ENCODE measurements at regions of chr5 and their contacts with region 1.

Region 1: GRCh38 chr5:64229163-64229774 is 63.6 kb downstream of the RNF180 start:
- DNase-seq: no peak
- H3K4me3 ChIP-seq: no peak overlapping the region
- H3K27ac ChIP-seq: no peak overlapping the region
- H3K27me3 ChIP-seq: no peaks in the 10 kb centered on the region
- CTCF ChIP-seq: peak; percentile 44 to 81 (median 70)

Region 2: DNA sequence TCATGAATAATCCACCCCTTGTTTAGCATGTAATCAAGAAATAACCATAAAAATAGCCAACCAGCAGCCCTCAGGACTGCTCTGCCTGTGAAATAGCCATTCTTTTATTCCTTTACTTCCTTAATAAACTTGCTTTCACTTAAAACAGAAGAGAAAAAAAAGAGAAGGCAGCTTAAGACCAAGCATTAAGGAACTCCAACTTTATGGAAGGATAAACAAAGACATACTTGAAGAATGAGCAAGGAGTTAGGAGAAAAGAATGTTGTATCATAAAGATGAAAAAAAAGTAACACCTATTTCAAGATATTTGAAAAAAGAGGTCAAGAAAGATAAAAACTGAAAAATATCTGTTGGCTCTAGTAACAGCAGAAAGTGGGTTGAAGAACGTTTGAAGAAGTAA is 44.0 kb after region 1 on chr5:
- intact Hi-C with region 1: no loop called
- DNase-seq: no peak
- H3K4me3 ChIP-seq: no peak overlapping the region
- H3K27ac ChIP-seq: no peak overlapping the region
- H3K27me3 ChIP-seq: no peaks in the 10 kb centered on the region
- CTCF ChIP-seq: no peak

Region 3: DNA sequence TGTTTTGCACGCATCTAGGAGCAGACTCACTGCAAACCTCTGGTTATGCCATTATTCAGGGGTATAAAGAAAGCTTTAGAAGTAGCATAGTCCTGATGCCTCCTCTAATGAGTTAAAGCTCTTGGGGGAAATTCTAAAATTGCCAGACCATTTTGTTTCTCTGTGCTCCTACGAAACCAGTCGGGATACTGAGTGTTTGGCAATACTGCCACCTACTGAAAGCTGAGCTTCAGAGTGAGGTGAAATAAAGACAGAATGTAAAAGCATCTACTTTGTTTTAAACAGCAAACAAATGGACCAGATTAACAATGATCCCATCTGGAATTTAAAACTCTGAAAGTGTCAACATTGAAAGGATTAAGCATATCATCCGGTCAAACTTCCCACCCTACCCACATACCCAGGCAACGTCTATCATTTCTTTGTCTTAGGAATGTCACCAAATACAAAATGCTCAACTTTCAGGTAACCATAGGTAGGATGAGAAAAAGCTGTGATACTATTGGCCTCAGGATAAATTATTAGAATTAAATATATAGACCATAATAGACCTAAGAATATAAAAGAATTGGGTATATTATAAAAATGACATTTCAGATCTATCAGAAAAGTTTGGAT is 383.2 kb after region 1 on chr5:
- intact Hi-C with region 1: loop called in 1 of 2 experiments (anchors 2 kb)
- DNase-seq: peak in 3 of 10 donors; percentile 15 to 50 (median 48)
- H3K4me3 ChIP-seq: no peak overlapping the region
- H3K27ac ChIP-seq: no peak overlapping the region
- H3K27me3 ChIP-seq: peaks cover 0 to 3% (median 0%) of the 10 kb centered on the region in 45 donors
- CTCF ChIP-seq: peak; percentile 45 to 88 (median 74)

Measured in dorsolateral prefrontal cortex (tissue), 120 donors.